ENCODE measurements at regions of chr4 and their contacts with region 1.

Region 1: GRCh38 chr4:185039508-185040273 is 21.4 kb downstream of the HELT start:
- DNase-seq: peak; percentile 28
- H3K4me3 Mint-ChIP-seq: no peak overlapping the region
- H3K27ac Mint-ChIP-seq: no peak overlapping the region
- H3K4me1 Mint-ChIP-seq: peaks cover 7% of the 10 kb centered on the region
- H3K27me3 Mint-ChIP-seq: peaks cover 27% of the 10 kb centered on the region

Region 2: DNA sequence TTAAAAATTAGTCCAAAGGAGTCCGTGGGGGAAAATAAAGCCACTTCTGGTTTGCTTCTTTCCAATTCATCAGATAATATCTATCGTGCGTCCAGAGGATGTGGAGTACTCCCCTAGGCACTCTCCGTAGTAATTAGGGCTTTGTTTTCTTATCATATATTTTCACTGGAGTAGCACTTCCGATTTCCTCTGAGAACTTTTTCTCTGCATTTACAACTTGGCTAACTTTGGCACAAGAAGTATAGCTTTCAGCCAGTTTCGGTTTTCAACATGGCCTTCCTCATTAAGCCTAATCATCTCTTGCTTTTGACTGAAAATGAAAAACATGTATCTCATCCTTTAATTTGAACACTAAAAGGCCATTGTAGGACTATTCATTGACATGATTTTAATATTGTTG is 470.9 kb before region 1 on chr4:
- intact Hi-C with region 1: no loop called
- DNase-seq: no peak
- H3K4me3 Mint-ChIP-seq: no peak overlapping the region
- H3K27ac Mint-ChIP-seq: no peak overlapping the region
- H3K4me1 Mint-ChIP-seq: peaks cover 8% of the 10 kb centered on the region
- H3K27me3 Mint-ChIP-seq: no peaks in the 10 kb centered on the region

Region 3: DNA sequence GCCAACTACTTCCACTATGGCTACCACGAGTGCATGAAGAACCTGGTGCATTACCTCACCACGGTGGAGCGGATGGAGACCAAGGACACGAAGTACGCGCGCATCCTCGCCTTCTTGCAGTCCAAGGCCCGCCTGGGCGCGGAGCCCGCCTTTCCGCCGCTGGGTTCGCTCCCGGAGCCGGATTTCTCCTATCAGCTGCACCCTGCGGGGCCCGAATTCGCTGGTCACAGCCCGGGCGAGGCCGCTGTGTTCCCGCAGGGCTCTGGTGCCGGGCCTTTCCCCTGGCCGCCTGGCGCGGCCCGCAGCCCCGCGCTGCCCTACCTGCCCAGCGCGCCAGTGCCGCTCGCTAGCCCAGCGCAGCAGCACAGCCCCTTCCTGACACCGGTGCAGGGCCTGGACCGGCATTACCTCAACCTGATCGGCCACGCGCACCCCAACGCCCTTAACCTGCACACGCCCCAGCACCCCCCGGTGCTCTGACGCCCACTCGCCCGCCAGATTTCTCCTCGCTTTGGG is 19.3 kb before region 1 on chr4:
- intact Hi-C with region 1: no loop called
- DNase-seq: no peak
- H3K4me3 Mint-ChIP-seq: no peak overlapping the region
- H3K27ac Mint-ChIP-seq: peak overlapping the region; percentile 55
- H3K4me1 Mint-ChIP-seq: no peaks in the 10 kb centered on the region
- H3K27me3 Mint-ChIP-seq: peaks cover 88% of the 10 kb centered on the region

Region 4: GRCh38 chr4:185096032-185096653 is 56.5 kb after region 1 on chr4:
- intact Hi-C with region 1: loop called (anchors 1 kb)
- DNase-seq: no peak
- H3K4me3 Mint-ChIP-seq: no peak overlapping the region
- H3K27ac Mint-ChIP-seq: no peak overlapping the region
- H3K4me1 Mint-ChIP-seq: no peaks in the 10 kb centered on the region
- H3K27me3 Mint-ChIP-seq: peaks cover 17% of the 10 kb centered on the region

Region 5: DNA sequence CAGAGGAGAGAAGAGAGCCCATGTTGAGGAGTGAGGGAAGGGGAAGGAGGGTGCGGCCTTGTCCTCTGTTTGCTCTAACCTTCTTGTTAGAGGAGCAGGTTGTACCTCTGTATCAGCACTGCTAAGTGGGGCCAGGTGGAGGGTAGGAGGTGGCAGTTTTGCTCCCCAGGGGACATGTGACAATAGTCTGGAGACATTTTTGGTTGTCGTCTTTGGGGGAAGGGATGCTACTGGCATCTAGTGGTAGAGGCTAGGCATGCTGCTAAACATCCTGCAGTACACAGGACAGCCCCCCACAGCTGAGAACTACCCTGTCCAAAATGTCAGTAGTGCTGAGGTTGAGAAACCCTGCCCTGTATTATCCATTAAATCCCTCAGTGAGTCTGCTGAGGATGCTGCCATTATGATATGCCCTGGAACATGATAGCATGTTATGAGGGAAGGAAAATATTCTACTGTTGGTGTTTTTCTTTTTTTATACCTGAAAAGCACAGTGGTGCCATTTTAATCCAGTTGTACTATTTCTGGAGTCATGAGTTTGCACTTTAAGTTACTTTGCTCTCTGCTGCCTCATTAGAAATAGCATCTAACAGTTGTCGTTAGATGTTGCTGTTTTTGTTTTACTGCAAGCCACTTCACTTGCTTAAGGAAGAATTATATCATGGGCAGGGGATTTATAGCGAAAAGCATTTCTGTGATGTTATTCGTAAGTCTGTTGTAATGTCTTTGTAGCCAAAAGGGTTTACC is 265.4 kb after region 1 on chr4:
- intact Hi-C with region 1: loop called (anchors 10 kb)
- DNase-seq: no peak
- H3K4me3 Mint-ChIP-seq: no peak overlapping the region
- H3K27ac Mint-ChIP-seq: no peak overlapping the region
- H3K4me1 Mint-ChIP-seq: peaks cover 22% of the 10 kb centered on the region
- H3K27me3 Mint-ChIP-seq: no peaks in the 10 kb centered on the region

Region 6: GRCh38 chr4:185597532-185598188 is 558.0 kb after region 1 on chr4:
- intact Hi-C with region 1: loop called (anchors 1 kb)
- DNase-seq: peak; percentile 32
- H3K4me3 Mint-ChIP-seq: no peak overlapping the region
- H3K27ac Mint-ChIP-seq: no peak overlapping the region
- H3K4me1 Mint-ChIP-seq: no peaks in the 10 kb centered on the region
- H3K27me3 Mint-ChIP-seq: peaks cover 13% of the 10 kb centered on the region

Measured in activated T-helper 1 cell treated with anti-CD3 and anti-CD28 coated beads, Interleukin-12 subunit alpha, Interleukin-12 subunit beta, Interleukin-2, Interleukin-4 antibody, amounts not matched to agents 30 ng/mL and 10 ng/mL and 1 ng/mL, durations not matched to agents 14 hours and 24 hours and 36 hours (primary cell).